Activated CD4-positive, alpha-beta memory T cell treated with anti-CD3 and anti-CD28 coated beads, Interleukin-2, amount 10 ng/mL, durations not matched to agents 7 days and 5 days (primary cell): ENCODE measurements at regions of chr14 and their contacts with region 1.

Region 1: GRCh38 chr14:94021001-94021400 is 5.1 kb upstream of the OTUB2 start:
- DNase-seq: no peak
- H3K4me3 Mint-ChIP-seq: no peak overlapping the region
- H3K27ac Mint-ChIP-seq: peak overlapping the region; percentile 78
- H3K4me1 Mint-ChIP-seq: peaks cover 53% of the 10 kb centered on the region
- H3K27me3 Mint-ChIP-seq: peaks cover 3% of the 10 kb centered on the region

Region 2: GRCh38 chr14:94009767-94010166 is 11.2 kb before region 1 on chr14:
- CTCF ChIA-PET with region 1: interaction called, 9 read pairs
- POLR2A ChIA-PET with region 1: interaction called, 14 read pairs
- DNase-seq: no peak
- H3K4me3 Mint-ChIP-seq: no peak overlapping the region
- H3K27ac Mint-ChIP-seq: peak overlapping the region; percentile 61
- H3K4me1 Mint-ChIP-seq: peaks cover 69% of the 10 kb centered on the region
- H3K27me3 Mint-ChIP-seq: peaks cover 5% of the 10 kb centered on the region